HepG2 (cell line): ENCODE measurements at regions of chr6 and their contacts with region 1.

Region 1: GRCh38 chr6:43769526-43770416 is at the start of gene VEGFA:
- DNase-seq: peak; percentile 83
- ATAC-seq: peak; percentile 61
- H3K4me3 ChIP-seq: peak within 1 kb of the TSS; percentile 90 to 98 (median 95)
- H3K27ac ChIP-seq: peak within 1 kb of the TSS; percentile 86
- H3K4me1 ChIP-seq: peaks cover 64% of the 10 kb centered on the region
- H3K27me3 ChIP-seq: no peaks in the 10 kb centered on the region; a peak in 1 of 5 replicates
- CTCF ChIP-seq: peak; percentile 99
- EP300 ChIP-seq: 0 out of 4 replicates have a peak, but pooled peaks of 1 of the 2 experiments have one; percentile 19
- POLR2A ChIP-seq: peak in 1 of 2 experiments; percentile 91; a peak in 2 of 4 replicates
- RAD21 ChIP-seq: peak; percentile 93
- total RNA-seq, gene VEGFA: 34.1 and 68.1 TPM in 2 replicates

Region 2: GRCh38 chr6:43444036-43444435 is 325.7 kb before region 1 on chr6:
- CTCF ChIA-PET with region 1: no interaction called
- POLR2A ChIA-PET with region 1: no interaction called
- in situ Hi-C with region 1: no loop called
- intact Hi-C with region 1: no loop called
- DNase-seq: no peak
- ATAC-seq: no peak
- H3K4me3 ChIP-seq: no peak overlapping the region
- H3K27ac ChIP-seq: no peak overlapping the region
- H3K4me1 ChIP-seq: no peaks in the 10 kb centered on the region
- H3K27me3 ChIP-seq: no peaks in the 10 kb centered on the region
- CTCF ChIP-seq: no peak
- EP300 ChIP-seq: no peak
- POLR2A ChIP-seq: no peak
- RAD21 ChIP-seq: no peak

Region 3: DNA sequence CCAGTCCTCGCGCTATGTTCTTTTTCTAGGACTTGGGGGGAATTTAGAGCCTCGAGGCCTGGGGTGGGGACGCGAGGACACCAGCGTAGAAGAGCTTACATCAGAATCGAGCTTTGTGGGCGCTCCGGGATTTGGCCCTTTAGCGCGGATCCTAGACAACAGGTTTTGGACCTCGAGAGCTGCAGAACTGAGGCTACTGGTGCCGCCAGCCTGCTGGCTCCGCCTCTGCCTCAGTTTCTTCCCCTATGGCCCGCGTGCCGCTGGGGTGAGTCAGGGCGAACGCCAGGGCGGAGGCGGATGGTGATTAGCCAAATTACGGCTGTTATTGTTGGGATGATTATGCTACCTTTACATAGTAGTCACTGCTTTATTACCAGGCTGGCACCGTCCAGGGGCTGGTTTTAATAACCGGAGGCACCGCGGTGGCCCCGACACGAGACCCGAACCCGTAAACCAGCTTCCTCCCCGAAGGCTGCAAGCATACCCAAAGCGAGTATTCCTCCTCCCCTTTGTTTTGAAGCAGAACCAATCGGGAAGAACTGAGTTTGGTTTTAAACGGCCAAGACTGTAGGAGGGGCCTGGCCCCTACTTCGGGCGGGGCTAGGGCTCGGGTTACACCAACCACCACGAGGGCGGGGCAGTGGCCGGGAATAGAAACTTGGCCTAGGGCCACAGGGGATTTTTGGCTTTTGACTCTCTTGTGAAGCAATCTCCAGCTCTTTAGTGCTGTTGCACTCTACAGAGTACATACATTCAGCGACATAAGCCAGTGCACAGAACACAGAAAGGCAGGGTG is 140.1 kb before region 1 on chr6:
- CTCF ChIA-PET with region 1: no interaction called
- POLR2A ChIA-PET with region 1: interaction called, 16 read pairs
- in situ Hi-C with region 1: no loop called
- intact Hi-C with region 1: no loop called
- DNase-seq: peak; percentile 98
- ATAC-seq: peak; percentile 86
- H3K4me3 ChIP-seq: peak overlapping the region; percentile 64 to 85 (median 76)
- H3K27ac ChIP-seq: peak overlapping the region; percentile 87
- H3K4me1 ChIP-seq: peaks cover 36% of the 10 kb centered on the region
- H3K27me3 ChIP-seq: no peaks in the 10 kb centered on the region; a peak in 1 of 5 replicates
- CTCF ChIP-seq: no peak; the same call in 1 of the 2 replicates
- EP300 ChIP-seq: 0 out of 4 replicates have a peak, but pooled peaks of 1 of the 2 experiments have one; percentile 16
- POLR2A ChIP-seq: peak; percentile 86 to 93
- RAD21 ChIP-seq: 0 out of 2 replicates have a peak, but pooled peaks have one; percentile 15

Region 4: DNA sequence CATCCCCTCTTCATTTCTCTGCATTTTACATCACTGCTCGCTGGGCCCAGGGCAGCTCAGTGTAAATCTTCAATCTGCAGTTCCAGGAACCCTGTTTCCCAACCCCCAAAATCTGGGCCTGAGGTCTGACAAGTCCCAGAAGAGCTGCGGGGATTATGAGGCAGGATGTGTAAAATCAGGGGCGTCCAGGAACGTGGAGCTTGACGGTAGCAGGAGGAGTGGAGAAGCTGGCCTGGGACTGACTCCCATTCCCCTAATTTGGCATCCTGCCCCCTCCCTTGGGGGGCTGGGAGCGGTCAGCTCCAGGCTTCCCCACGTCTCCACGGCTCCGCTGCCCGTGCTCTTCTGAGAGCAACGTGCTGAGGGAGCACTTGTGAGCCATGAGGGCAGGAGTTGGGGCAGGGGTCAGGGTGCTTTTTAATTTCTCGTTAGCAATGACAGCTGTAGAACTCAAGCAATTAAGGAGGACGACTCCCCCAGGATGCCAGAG is 23.1 kb before region 1 on chr6:
- CTCF ChIA-PET with region 1: no interaction called
- POLR2A ChIA-PET with region 1: interaction called, 17 read pairs
- in situ Hi-C with region 1: no loop called
- intact Hi-C with region 1: no loop called
- DNase-seq: no peak
- ATAC-seq: no peak
- H3K4me3 ChIP-seq: no peak overlapping the region
- H3K27ac ChIP-seq: no peak overlapping the region
- H3K4me1 ChIP-seq: peaks cover 52% of the 10 kb centered on the region
- H3K27me3 ChIP-seq: peaks cover 3 to 51% of the 10 kb centered on the region in 2 experiments
- CTCF ChIP-seq: no peak
- EP300 ChIP-seq: no peak
- POLR2A ChIP-seq: no peak
- RAD21 ChIP-seq: no peak

Region 5: DNA sequence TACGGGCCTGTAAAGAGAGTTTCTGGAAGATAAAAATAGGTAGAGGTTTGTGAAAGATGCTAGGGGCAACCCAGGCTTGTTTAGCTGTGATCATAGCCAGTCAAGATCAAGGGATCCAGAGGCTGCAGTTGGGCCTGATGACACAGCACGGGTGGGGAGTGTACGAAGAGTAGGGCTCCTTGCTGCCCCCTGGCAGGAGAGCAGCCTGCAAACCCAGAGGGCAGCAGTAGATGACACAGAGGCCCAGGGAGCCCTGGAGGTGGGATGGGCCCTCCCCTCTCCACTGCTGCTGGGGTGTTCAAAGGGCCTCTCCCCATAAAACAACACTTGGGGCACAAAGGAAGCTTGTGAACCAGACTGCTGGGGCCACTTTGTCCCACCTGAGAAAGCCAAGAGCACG is 47.4 kb after region 1 on chr6:
- CTCF ChIA-PET with region 1: interaction called, 19 read pairs
- POLR2A ChIA-PET with region 1: interaction called, 12 read pairs
- in situ Hi-C with region 1: no loop called
- intact Hi-C with region 1: loop called (anchors 1 kb)
- DNase-seq: peak; percentile 72
- ATAC-seq: peak; percentile 99
- H3K4me3 ChIP-seq: no peak overlapping the region
- H3K27ac ChIP-seq: no peak overlapping the region
- H3K4me1 ChIP-seq: peaks cover 46% of the 10 kb centered on the region
- H3K27me3 ChIP-seq: peaks cover 0 to 3% of the 10 kb centered on the region in 2 experiments; a peak in 2 of 5 replicates
- CTCF ChIP-seq: peak; percentile 92
- EP300 ChIP-seq: no peak
- POLR2A ChIP-seq: no peak
- RAD21 ChIP-seq: peak; percentile 86

Region 6: GRCh38 chr6:43856005-43856765 is 86.4 kb after region 1 on chr6:
- CTCF ChIA-PET with region 1: interaction called, 3 read pairs
- POLR2A ChIA-PET with region 1: interaction called, 9 read pairs
- in situ Hi-C with region 1: no loop called
- intact Hi-C with region 1: loop called (anchors 5 kb)
- DNase-seq: peak; percentile 86
- ATAC-seq: peak; percentile 91
- H3K4me3 ChIP-seq: no peak overlapping the region
- H3K27ac ChIP-seq: no peak overlapping the region
- H3K4me1 ChIP-seq: peaks cover 85% of the 10 kb centered on the region
- H3K27me3 ChIP-seq: peaks cover 3 to 4% of the 10 kb centered on the region in 2 experiments; a peak in 1 of 5 replicates
- CTCF ChIP-seq: peak; percentile 99
- EP300 ChIP-seq: peak in 1 of 2 experiments; percentile 20; a peak in 1 of 4 replicates
- POLR2A ChIP-seq: no peak
- RAD21 ChIP-seq: peak; percentile 96

Region 7: DNA sequence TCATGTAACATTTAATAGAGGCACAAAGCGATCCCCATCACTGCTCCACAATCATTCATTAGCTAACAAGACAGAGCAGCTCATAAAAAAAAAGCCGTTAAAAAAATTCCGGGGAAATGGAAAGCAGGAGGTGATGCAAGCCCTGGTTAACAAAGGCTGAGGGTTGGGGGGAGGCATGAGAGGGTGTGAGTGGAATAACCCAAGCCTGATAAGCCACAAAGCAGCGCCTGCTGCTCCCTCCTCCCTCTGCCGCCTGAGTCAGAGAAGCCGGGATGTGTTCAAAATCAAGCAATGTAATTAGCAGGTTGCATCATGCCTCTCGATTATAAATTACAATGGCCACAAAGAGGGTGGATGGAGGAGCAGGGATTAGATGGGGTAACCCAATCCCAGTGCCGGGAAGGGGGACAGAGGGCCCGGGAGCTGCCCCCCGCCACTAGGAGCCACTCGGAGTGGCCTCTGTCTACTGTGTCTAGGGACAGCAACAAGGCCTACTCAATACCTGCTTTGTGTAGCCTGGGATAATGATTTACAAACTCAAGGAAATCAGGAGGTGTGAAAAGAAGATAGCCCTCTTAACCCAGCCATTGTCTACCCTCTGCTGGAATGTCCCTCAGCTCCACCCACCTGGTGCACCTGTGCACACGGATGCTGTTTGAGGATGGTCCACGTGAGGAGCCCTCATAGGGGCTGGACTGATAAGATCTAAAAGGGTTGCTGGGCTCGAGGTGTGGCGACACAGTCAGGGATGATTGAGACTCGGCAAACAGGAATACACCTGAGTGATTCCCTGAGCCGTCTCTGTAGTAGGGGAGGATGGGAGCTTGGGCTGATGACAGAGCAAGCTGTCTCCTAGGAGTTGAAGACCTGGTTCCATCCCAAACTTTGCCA is 157.1 kb after region 1 on chr6:
- CTCF ChIA-PET with region 1: no interaction called
- POLR2A ChIA-PET with region 1: interaction called, 16 read pairs
- in situ Hi-C with region 1: no loop called
- intact Hi-C with region 1: no loop called
- DNase-seq: peak; percentile 90
- ATAC-seq: peak; percentile 90
- H3K4me3 ChIP-seq: peak overlapping the region in 2 of 3 experiments; percentile 12 to 35; a peak in 2 of 6 replicates
- H3K27ac ChIP-seq: peak overlapping the region; percentile 69
- H3K4me1 ChIP-seq: peaks cover 74% of the 10 kb centered on the region
- H3K27me3 ChIP-seq: peaks cover 0 to 2% of the 10 kb centered on the region in 2 experiments; a peak in 1 of 5 replicates
- CTCF ChIP-seq: no peak; the same call in none of the 2 replicates
- EP300 ChIP-seq: peak in 1 of 2 experiments; percentile 93; a peak in 2 of 4 replicates
- POLR2A ChIP-seq: peak; percentile 31 to 44; a peak in 2 of 4 replicates
- RAD21 ChIP-seq: peak; percentile 35; the same call in 1 of the 2 replicates

Region 8: DNA sequence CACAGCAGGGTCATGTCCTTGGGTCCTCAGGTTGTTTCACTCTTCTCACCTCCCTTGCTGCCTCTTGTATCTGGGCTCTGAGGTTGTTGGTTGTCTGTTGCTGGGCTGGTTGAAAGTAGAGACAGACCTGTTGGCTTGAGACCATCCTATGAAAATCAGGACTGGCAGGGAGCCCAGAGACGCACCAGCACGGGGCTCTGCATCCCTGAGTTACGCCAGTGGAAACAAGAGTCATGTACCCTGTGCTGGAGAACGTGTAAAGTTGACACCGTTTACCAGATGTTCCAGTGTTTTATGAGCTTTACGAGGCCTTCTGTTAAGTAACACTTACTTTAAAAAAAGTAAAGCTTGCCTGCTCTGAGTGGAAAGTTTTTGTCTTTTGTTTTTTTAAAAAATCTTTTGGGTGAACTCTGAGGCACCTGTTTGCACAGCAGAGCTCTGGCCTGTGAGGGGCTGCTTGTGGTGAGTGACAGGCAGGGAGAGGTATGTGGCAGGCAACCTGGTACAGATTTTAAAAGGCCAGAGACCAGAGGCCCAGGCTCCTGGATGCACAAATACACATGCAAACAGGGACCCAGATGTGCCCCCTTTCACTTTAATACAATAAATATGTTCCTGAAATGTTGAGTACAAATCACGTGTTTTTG is 1868.0 kb after region 1 on chr6:
- CTCF ChIA-PET with region 1: no interaction called
- POLR2A ChIA-PET with region 1: no interaction called
- in situ Hi-C with region 1: no loop called
- intact Hi-C with region 1: loop called (anchors 10 kb)
- DNase-seq: no peak
- ATAC-seq: no peak
- H3K4me3 ChIP-seq: no peak overlapping the region
- H3K27ac ChIP-seq: no peak overlapping the region
- H3K4me1 ChIP-seq: no peaks in the 10 kb centered on the region
- H3K27me3 ChIP-seq: peaks cover 0 to 29% of the 10 kb centered on the region in 2 experiments; a peak in 4 of 5 replicates
- CTCF ChIP-seq: no peak
- EP300 ChIP-seq: no peak
- POLR2A ChIP-seq: no peak
- RAD21 ChIP-seq: no peak